Transverse colon (tissue), 4 donors: ENCODE measurements at regions of chr3 and their contacts with region 1.

Region 1: GRCh38 chr3:71710906-71711494 is 14.2 kb downstream of the EIF4E3 start:
- DNase-seq: no peak
- H3K4me3 ChIP-seq: no peak overlapping the region
- H3K27ac ChIP-seq: no peak overlapping the region
- H3K4me1 ChIP-seq: peaks cover 0 to 8% (median 1%) of the 10 kb centered on the region in 4 donors
- H3K27me3 ChIP-seq: no peaks in the 10 kb centered on the region
- CTCF ChIP-seq: peak; percentile 56 to 66 (median 63)
- EP300 ChIP-seq: no peak
- POLR2A ChIP-seq: no peak

Region 2: GRCh38 chr3:71859123-71859519 is 148.1 kb after region 1 on chr3:
- in situ Hi-C with region 1: loop called in 1 of 4 experiments (anchors 25 kb)
- intact Hi-C with region 1: no loop called
- DNase-seq: no peak
- H3K4me3 ChIP-seq: no peak overlapping the region
- H3K27ac ChIP-seq: no peak overlapping the region
- H3K4me1 ChIP-seq: no peaks in the 10 kb centered on the region
- H3K27me3 ChIP-seq: no peaks in the 10 kb centered on the region
- CTCF ChIP-seq: peak in 4 of 5 experiments; percentile 21 to 36 (median 32)
- EP300 ChIP-seq: no peak
- POLR2A ChIP-seq: no peak

Region 3: DNA sequence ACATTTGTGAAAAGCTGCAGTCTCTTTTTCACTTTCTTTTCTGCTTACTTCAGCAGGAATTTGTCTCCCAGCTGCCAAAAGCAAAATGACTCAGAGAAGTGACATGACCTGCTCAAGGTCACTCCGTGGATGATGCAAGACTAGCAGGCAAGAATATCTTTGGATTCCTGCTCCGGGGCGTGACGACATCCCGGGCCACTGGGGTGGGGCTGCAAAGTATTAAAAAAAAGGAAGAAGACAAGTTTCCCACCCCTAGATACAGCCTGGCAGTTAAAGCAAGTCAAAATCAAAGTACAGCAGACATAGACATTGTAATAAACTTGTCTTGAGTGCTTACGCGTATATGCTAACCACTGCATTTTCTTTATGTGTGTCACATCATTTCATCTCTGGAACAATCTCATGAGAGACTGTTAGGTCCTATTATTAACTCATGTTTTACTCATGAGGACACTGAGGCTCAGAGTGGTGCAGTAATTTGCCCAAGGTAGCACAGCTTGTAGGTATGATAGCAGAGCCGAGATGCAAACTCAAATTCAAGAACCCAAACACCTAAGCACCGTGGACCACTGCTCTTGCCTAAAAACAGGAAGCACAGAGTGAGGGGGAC is 559.2 kb after region 1 on chr3:
- in situ Hi-C with region 1: loop called in 1 of 4 experiments (anchors 25 kb)
- intact Hi-C with region 1: no loop called
- DNase-seq: peak; percentile 84
- H3K4me3 ChIP-seq: no peak overlapping the region
- H3K27ac ChIP-seq: peak overlapping the region; percentile 23 to 52 (median 38)
- H3K4me1 ChIP-seq: peaks cover 18 to 44% (median 27%) of the 10 kb centered on the region in 4 donors
- H3K27me3 ChIP-seq: no peaks in the 10 kb centered on the region
- CTCF ChIP-seq: no peak
- EP300 ChIP-seq: peak; percentile 14
- POLR2A ChIP-seq: no peak

Region 4: GRCh38 chr3:72847751-72848702 is 1137.0 kb after region 1 on chr3 and contains the start of gene SHQ1:
- in situ Hi-C with region 1: loop called in 1 of 4 experiments (anchors 25 kb)
- intact Hi-C with region 1: no loop called
- DNase-seq: peak; percentile 98
- H3K4me3 ChIP-seq: peak within 1 kb of the TSS; percentile 75 to 93 (median 84)
- H3K27ac ChIP-seq: peak within 1 kb of the TSS; percentile 79 to 90 (median 86)
- H3K4me1 ChIP-seq: peaks cover 7 to 35% (median 14%) of the 10 kb centered on the region in 4 donors
- H3K27me3 ChIP-seq: no peaks in the 10 kb centered on the region
- CTCF ChIP-seq: no peak
- EP300 ChIP-seq: no peak
- POLR2A ChIP-seq: peak; percentile 25
- total RNA-seq, gene SHQ1: 4.9 to 21.3 (median 13.1) TPM

Region 5: DNA sequence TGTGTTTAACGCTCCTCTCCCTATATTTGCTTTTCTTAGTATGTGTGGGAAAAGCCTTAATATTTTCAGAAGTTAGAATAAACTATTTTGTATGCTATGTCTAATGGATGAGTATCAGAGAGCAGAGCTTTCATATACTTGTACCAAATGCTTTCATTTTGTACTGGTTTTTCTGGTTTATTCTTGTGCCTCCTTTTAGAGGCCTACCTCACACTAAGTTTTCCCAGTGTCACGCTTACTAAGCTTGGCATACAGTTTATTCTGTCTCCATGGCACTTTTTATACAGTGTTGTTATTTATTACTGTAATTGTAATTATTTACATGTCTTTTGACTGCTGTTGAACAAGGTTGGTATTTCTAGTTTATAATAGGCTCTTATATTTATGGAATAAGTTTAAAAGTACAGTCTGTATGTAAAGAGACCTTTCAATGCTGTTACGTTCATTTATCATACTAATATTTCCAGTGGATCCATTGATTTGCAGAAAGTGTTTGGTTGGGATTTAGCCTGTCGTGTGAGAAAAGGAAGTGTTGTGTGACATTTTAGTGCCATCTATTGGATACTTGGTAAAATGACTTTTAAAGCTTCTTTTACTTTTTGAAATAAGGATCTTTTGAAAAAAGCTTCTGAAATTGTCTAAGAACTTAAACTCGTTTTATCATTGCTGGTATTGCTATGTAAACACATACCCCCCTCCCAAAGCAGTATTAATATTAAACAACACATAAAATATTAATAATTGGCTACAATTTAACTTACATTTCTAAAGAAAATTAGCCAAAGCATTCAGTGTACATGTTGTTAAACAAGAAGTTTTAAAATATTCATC is 1345.2 kb after region 1 on chr3:
- in situ Hi-C with region 1: loop called in 1 of 4 experiments (anchors 25 kb)
- intact Hi-C with region 1: no loop called
- DNase-seq: no peak
- H3K4me3 ChIP-seq: no peak overlapping the region
- H3K27ac ChIP-seq: peak overlapping the region in 3 of 4 donors; percentile 18 to 52 (median 49)
- H3K4me1 ChIP-seq: peaks cover 8 to 25% (median 22%) of the 10 kb centered on the region in 4 donors
- H3K27me3 ChIP-seq: no peaks in the 10 kb centered on the region
- CTCF ChIP-seq: peak; percentile 47 to 66 (median 57)
- EP300 ChIP-seq: no peak
- POLR2A ChIP-seq: no peak

Region 6: DNA sequence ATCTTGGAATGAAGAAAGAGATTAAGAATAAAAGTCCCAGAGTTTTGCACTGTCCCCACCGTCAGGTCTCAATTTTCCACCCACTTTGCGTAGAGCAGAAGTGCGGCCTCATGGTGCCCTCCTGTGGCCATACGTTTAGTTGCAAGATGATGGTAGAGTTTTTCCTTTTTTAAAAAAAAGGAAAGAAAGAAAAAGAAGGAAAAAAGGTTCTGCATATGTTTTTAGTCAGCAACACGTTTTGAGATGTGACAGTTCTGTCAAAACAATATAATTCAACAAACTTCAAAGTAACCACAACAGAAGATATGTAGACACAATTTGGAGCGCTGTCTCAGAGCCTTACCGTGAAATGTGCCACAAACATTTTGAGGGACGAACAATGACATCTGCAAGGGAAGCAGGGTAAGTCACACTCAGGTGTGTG is 1375.1 kb after region 1 on chr3:
- in situ Hi-C with region 1: loop called in 1 of 4 experiments (anchors 25 kb)
- intact Hi-C with region 1: no loop called
- DNase-seq: peak; percentile 42
- H3K4me3 ChIP-seq: no peak overlapping the region
- H3K27ac ChIP-seq: no peak overlapping the region
- H3K4me1 ChIP-seq: peaks cover 0 to 7% (median 2%) of the 10 kb centered on the region in 4 donors
- H3K27me3 ChIP-seq: no peaks in the 10 kb centered on the region
- CTCF ChIP-seq: peak; percentile 76 to 88 (median 83)
- EP300 ChIP-seq: no peak
- POLR2A ChIP-seq: no peak

Region 7: GRCh38 chr3:73245459-73245858 is 1534.5 kb after region 1 on chr3:
- in situ Hi-C with region 1: no loop called
- intact Hi-C with region 1: no loop called
- DNase-seq: no peak
- H3K4me3 ChIP-seq: no peak overlapping the region
- H3K27ac ChIP-seq: no peak overlapping the region
- H3K4me1 ChIP-seq: no peaks in the 10 kb centered on the region
- H3K27me3 ChIP-seq: no peaks in the 10 kb centered on the region
- CTCF ChIP-seq: no peak
- EP300 ChIP-seq: no peak
- POLR2A ChIP-seq: no peak